ENCODE measurements at regions of chr5 and their contacts with region 1.

Region 1: DNA sequence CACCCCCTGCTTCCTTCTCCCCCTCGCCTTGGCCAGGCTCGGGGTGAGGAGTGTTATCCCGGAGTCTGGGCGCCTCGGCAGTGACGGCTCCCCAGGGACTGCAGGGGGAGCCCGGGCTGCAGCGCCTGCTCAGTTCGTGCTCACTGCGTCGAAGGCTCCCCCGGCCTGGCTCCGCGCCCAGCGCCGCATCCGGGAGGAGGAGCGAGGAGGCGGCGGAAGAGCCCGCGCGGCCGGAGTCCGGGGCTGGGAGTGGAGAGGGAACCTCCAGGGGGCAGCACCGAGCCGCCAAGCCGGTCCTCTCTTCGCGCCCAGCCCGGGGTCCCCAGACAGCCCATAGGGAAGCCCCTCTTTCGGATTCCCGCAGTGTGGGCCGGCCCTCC is 1.3 kb upstream of the EGR1 start:
- DNase-seq: peak; percentile 94 to 95
- ATAC-seq: peak; percentile 44 to 67
- H3K4me3 ChIP-seq: peak overlapping the region; percentile 66
- H3K27ac ChIP-seq: peak overlapping the region; percentile 95 to 96
- H3K4me1 ChIP-seq: peaks cover 12% of the 10 kb centered on the region
- CTCF ChIP-seq: peak; percentile 90
- EP300 ChIP-seq: no peak
- POLR2A ChIP-seq: peak; percentile 64
- RAD21 ChIP-seq: peak; percentile 31 to 71

Region 2: DNA sequence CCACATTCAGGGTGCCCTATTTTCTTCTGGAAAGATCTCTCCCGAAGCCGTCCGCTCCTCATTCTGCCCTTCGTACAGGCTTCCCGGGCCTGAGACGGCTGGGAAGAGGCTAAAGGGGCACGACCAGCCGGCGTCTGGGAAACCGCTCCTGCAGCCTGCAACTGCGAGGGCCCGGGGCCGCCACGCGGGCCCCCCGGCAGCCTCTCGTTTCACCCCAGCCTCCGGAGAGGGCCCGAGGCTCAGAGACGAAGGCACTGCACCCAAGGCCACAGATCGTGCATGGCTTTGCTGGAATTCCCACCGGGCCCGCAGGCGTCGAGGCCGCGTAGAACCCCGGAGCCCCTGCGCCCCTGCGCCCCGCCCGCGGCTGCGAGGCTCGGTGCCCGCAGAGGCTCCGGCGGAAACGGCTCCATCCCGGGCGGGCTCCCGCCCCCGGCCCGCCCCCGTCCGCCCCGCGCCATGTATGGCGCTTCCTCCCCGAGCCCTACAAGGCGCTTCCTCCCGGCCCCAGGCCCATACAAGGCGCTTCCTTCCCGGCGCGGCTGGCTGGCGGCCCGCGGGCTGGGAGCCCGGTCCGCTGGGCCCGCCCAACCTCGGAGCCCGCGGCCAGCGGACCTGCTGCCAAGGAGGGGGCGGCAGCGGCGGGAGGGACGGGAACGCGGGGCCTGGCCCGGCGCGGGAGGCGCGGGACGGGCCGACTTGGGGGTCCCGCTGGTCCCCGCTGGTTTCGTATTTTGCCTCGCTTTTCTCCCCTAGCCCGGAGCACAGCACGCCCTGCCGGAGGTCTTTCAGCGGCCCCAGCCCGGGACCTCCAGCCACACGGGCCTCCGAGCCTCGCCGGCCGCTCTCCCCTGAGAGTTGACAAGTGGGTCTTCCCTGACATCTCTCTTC is 27.9 kb after region 1 on chr5:
- CTCF ChIA-PET with region 1: interaction called, 199 read pairs
- POLR2A ChIA-PET with region 1: interaction called, 4 read pairs
- DNase-seq: peak; percentile 54 to 69
- ATAC-seq: peak; percentile 81 to 86
- H3K4me3 ChIP-seq: peak overlapping the region; percentile 50
- H3K27ac ChIP-seq: peak overlapping the region; percentile 70 to 88
- H3K4me1 ChIP-seq: peaks cover 9% of the 10 kb centered on the region; the same call in 1 of the 3 replicates
- CTCF ChIP-seq: no peak
- EP300 ChIP-seq: no peak
- POLR2A ChIP-seq: no peak
- RAD21 ChIP-seq: no peak

Region 3: GRCh38 chr5:138542956-138543729 is 79.1 kb after region 1 on chr5 and contains the start of gene ETF1:
- CTCF ChIA-PET with region 1: interaction called, 6 read pairs
- POLR2A ChIA-PET with region 1: interaction called, 11 read pairs
- DNase-seq: peak; percentile 96 to 99
- ATAC-seq: peak; percentile 83 to 92
- H3K4me3 ChIP-seq: peak within 1 kb of the TSS; percentile 100
- H3K27ac ChIP-seq: peak within 1 kb of the TSS; percentile 93 to 98
- H3K4me1 ChIP-seq: peaks cover 47% of the 10 kb centered on the region
- CTCF ChIP-seq: no peak
- EP300 ChIP-seq: no peak
- POLR2A ChIP-seq: peak; percentile 76
- RAD21 ChIP-seq: no peak
- polyA plus RNA-seq, gene ETF1: 140 and 161 TPM in 2 replicates

Measured in A549 (cell line).